Pancreas (tissue), 10 donors: ENCODE measurements at regions of chr2 and their contacts with region 1.

Region 1: DNA sequence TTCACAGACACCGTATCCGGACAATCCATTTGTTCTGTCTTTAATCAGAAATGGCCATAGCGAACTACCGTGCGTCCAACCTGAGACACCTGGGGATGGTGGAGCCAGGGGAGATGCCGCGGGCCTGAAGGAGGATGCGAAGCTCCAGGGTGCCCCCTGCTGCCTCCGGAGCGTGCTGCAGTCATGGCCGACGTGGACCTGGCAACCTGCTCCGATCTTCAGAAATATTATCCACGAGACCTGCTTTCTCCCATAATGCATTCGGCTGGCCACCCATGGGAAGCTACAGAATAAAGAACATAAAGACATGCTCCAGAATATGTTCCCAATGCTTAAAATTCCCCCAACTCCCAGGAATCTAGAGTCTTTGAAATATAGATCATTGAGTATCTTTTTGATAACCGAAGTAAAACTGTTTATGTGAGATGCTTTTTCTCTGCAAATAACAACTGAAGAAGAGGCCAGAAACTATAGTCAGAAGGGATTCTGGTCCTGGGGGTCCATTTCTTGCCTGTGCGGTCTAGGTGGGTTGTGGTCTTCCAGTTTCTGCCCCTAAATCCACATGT is 30.7 kb upstream of the SLC66A3 start:
- DNase-seq: peak; percentile 59 to 91 (median 82)
- ATAC-seq: peak; percentile 85 to 94 (median 92)
- H3K4me3 ChIP-seq: no peak overlapping the region
- H3K27ac ChIP-seq: no peak overlapping the region
- H3K4me1 ChIP-seq: no peaks in the 10 kb centered on the region
- H3K27me3 ChIP-seq: no peaks in the 10 kb centered on the region
- CTCF ChIP-seq: peak; percentile 53 to 78 (median 72)

Region 2: DNA sequence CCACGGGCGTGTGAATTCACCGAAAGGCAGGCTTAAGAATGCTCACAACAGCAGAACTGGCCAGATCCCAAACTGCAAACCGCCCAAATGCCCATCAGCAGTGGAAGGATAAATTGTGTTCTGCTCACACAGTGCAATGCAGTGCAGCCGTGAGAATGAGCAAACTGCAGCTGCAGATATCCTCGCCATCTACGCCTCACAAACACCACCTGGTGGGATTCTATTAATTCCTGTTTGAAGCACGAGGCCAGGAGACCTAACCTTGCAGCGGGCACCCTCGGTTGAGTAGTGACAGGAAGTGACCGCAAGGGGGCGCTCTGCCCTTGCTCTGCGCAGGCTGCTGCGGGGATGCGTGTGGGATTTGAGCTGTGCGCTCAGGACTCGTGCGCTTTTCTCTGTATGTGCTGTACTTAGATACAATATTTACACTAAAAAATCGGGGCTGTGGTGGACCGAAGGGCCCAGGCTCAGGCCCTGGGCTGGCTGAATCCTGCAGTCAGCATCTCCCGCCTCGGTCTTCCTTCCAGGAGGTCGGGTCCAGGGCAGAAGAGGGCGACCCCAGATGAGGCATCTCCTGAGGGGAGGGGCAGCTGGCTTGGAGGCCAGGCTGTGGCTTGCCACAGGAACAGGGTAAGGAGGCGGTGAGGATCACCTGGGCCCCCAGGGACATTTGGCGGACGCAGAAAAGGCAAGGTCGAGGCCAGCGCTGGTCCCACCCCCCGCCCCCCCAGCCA is 292.2 kb before region 1 on chr2:
- intact Hi-C with region 1: loop called (anchors 2 to 10 kb)
- DNase-seq: peak; percentile 61 to 97 (median 84)
- ATAC-seq: peak; percentile 80 to 90 (median 88)
- H3K4me3 ChIP-seq: no peak overlapping the region
- H3K27ac ChIP-seq: no peak overlapping the region
- H3K4me1 ChIP-seq: peaks cover 0 to 8% (median 0%) of the 10 kb centered on the region in 3 donors
- H3K27me3 ChIP-seq: no peaks in the 10 kb centered on the region
- CTCF ChIP-seq: peak; percentile 98 to 99 (median 99)

Region 3: GRCh38 chr2:10837298-10838266 is 287.0 kb before region 1 on chr2:
- intact Hi-C with region 1: loop called (anchors 2 to 10 kb)
- DNase-seq: no peak
- ATAC-seq: no peak
- H3K4me3 ChIP-seq: no peak overlapping the region
- H3K27ac ChIP-seq: no peak overlapping the region
- H3K4me1 ChIP-seq: no peaks in the 10 kb centered on the region
- H3K27me3 ChIP-seq: no peaks in the 10 kb centered on the region
- CTCF ChIP-seq: no peak

Region 4: GRCh38 chr2:10911261-10912075 is 213.1 kb before region 1 on chr2 and contains the start of gene KCNF1:
- intact Hi-C with region 1: loop called in 1 of 3 experiments (anchors 10 kb)
- DNase-seq: peak in 2 of 6 donors; percentile 33 to 46
- ATAC-seq: peak; percentile 65 to 87 (median 76)
- H3K4me3 ChIP-seq: peak within 1 kb of the TSS in 2 of 4 donors; percentile 30 to 45
- H3K27ac ChIP-seq: no peak within 1 kb of the TSS
- H3K4me1 ChIP-seq: no peaks in the 10 kb centered on the region
- H3K27me3 ChIP-seq: peaks cover 0 to 8% (median 0%) of the 10 kb centered on the region in 4 donors
- CTCF ChIP-seq: no peak
- total RNA-seq, gene KCNF1: 0.08 to 1.3 (median 0.33) TPM